H1 (cell line): ENCODE measurements at regions of chr4 and their contacts with region 1.

Region 1: GRCh38 chr4:139682741-139683151 is 17.1 kb downstream of the MGST2 start:
- DNase-seq: no peak
- H3K4me3 ChIP-seq: no peak overlapping the region
- H3K27ac ChIP-seq: no peak overlapping the region
- H3K4me1 ChIP-seq: no peaks in the 10 kb centered on the region
- H3K27me3 ChIP-seq: no peaks in the 10 kb centered on the region
- CTCF ChIP-seq: no peak
- EP300 ChIP-seq: no peak
- POLR2A ChIP-seq: no peak
- RAD21 ChIP-seq: no peak

Region 2: DNA sequence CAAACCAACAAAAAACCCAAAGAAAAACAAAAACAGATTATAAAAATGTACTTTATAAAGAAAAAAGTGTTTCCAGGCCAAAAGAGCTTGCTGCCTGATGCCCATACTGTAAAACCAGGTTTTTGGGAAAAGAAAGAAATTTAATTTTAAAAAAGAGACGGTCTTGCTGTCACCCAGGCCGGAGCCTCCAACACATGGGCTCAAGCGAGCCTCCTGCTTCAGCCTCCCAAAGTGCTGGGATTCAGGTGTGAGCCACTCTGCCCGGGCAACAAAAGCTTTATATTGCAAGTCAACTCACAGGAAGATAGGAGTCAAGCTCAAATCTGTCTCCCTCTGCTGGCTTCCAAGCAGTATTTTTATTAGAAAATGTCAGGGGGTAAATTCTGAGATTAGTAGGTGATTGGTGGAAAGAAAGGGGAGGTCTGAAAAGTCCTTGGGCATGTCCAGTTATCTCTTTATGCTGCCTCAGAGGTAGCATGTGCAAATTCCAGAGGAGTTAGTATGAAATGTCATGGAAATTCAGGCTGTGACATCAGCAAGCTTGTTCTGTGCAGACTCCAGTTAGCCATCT is 22.3 kb after region 1 on chr4:
- CTCF ChIA-PET with region 1: interaction called, 16 read pairs
- POLR2A ChIA-PET with region 1: no interaction called
- DNase-seq: no peak
- H3K4me3 ChIP-seq: no peak overlapping the region
- H3K27ac ChIP-seq: no peak overlapping the region
- H3K4me1 ChIP-seq: no peaks in the 10 kb centered on the region
- H3K27me3 ChIP-seq: peaks cover 0 to under 1% (median 0%) of the 10 kb centered on the region in 4 experiments; a peak in 1 of 7 replicates
- CTCF ChIP-seq: peak in 2 of 3 experiments; percentile 28 to 37; a peak in 2 of 4 replicates
- EP300 ChIP-seq: no peak
- POLR2A ChIP-seq: no peak
- RAD21 ChIP-seq: peak; percentile 19 to 24; a peak in 3 of 4 replicates

Region 3: DNA sequence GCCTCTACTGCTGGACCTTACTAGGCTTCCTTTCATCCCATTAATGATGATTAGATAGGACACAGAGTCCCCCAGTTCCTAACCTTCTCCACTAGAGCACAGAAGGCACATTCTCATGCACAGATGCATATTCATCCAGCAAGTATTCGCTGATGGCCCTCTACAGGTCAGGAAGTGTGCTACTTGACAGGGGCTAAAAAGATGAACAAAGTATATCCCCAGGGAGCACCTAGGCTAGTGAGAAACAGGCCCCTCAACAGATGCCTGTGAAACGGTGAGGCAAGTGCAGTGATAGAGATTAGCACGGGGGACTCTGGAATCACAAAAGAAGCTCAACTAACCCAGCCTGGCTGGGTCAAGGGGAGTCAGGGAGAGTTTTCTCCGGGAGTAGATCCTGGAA is 78.7 kb after region 1 on chr4:
- CTCF ChIA-PET with region 1: no interaction called
- POLR2A ChIA-PET with region 1: no interaction called
- DNase-seq: no peak
- H3K4me3 ChIP-seq: no peak overlapping the region
- H3K27ac ChIP-seq: no peak overlapping the region
- H3K4me1 ChIP-seq: peaks cover 0 to 11% (median 5%) of the 10 kb centered on the region in 4 experiments; a peak in 2 of 7 replicates
- H3K27me3 ChIP-seq: no peaks in the 10 kb centered on the region; a peak in 1 of 7 replicates
- CTCF ChIP-seq: peak in 2 of 3 experiments; percentile 67 to 81; a peak in 3 of 4 replicates
- EP300 ChIP-seq: no peak
- POLR2A ChIP-seq: no peak
- RAD21 ChIP-seq: peak; percentile 45 to 54